Sciatic nerve (tissue), 2 donors: ENCODE measurements at regions of chr5 and their contacts with region 1.

Region 1: GRCh38 chr5:110561510-110561909 is 165.0 kb downstream of the TMEM232 start:
- DNase-seq: no peak
- ATAC-seq: no peak

Region 2: DNA sequence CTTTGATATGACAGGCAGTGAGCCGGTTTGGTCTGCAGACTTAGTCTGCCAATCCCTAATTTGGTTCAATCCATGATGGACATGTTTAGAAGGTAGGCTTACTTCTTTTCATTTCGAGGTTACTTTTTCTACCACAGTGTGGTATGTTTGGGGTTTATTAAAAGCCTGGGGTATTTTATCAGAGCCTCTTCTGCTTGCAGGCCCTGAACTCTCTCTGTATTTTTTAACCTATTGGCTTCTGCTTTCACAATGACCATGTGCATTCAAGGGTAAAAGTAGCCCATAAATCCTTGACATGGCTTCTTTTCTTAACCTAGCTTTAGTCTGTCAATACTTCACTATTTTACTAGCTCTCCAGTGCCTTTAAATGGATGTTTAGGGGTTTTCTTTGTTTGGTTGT is 1527.2 kb before region 1 on chr5:
- intact Hi-C with region 1: loop called (anchors 5 kb)
- DNase-seq: no peak
- ATAC-seq: no peak